AG04449 (cell line): ENCODE measurements at regions of chr17 and their contacts with region 1.

Region 1: GRCh38 chr17:63946440-63947367 is 14.6 kb upstream of the CD79B start:
- DNase-seq: no peak
- H3K4me3 ChIP-seq: no peak overlapping the region
- CTCF ChIP-seq: peak; percentile 77

Region 2: GRCh38 chr17:63911657-63912426 is 34.9 kb before region 1 on chr17:
- CTCF ChIA-PET with region 1: interaction called, 26 read pairs
- POLR2A ChIA-PET with region 1: no interaction called
- DNase-seq: no peak
- H3K4me3 ChIP-seq: no peak overlapping the region
- CTCF ChIP-seq: peak; percentile 79

Region 3: GRCh38 chr17:63919311-63919723 is 27.4 kb before region 1 on chr17:
- CTCF ChIA-PET with region 1: interaction called, 42 read pairs
- POLR2A ChIA-PET with region 1: no interaction called
- DNase-seq: no peak
- H3K4me3 ChIP-seq: no peak overlapping the region
- CTCF ChIP-seq: peak; percentile 89

Region 4: GRCh38 chr17:63925645-63926044 is 21.1 kb before region 1 on chr17:
- CTCF ChIA-PET with region 1: interaction called, 18 read pairs
- POLR2A ChIA-PET with region 1: no interaction called
- DNase-seq: no peak
- H3K4me3 ChIP-seq: no peak overlapping the region
- CTCF ChIP-seq: no peak

Region 5: DNA sequence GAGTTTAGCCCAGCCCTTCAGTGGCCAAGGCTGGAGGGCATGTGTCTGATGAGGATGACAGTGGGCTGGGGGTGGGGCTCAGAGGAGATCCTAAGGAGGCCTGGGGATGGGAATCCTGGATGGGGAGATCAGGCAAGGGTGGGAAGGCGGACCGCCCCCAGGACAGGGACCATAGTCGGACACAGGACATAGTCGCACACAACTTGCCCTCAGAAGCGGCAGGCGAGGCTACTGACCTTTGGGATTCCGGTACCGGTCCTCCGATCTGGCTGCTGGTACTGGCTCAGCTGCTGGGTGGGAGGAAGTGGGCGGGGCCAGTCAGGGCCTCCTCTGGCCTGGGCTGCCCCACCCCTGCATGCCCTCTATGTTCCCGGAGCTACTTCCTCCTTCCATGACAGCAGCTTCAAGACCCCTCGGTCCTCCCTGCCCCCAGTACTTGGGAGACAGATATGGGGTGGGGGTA is 15.6 kb before region 1 on chr17:
- CTCF ChIA-PET with region 1: interaction called, 24 read pairs
- POLR2A ChIA-PET with region 1: no interaction called
- DNase-seq: no peak
- H3K4me3 ChIP-seq: no peak overlapping the region
- CTCF ChIP-seq: no peak

Region 6: DNA sequence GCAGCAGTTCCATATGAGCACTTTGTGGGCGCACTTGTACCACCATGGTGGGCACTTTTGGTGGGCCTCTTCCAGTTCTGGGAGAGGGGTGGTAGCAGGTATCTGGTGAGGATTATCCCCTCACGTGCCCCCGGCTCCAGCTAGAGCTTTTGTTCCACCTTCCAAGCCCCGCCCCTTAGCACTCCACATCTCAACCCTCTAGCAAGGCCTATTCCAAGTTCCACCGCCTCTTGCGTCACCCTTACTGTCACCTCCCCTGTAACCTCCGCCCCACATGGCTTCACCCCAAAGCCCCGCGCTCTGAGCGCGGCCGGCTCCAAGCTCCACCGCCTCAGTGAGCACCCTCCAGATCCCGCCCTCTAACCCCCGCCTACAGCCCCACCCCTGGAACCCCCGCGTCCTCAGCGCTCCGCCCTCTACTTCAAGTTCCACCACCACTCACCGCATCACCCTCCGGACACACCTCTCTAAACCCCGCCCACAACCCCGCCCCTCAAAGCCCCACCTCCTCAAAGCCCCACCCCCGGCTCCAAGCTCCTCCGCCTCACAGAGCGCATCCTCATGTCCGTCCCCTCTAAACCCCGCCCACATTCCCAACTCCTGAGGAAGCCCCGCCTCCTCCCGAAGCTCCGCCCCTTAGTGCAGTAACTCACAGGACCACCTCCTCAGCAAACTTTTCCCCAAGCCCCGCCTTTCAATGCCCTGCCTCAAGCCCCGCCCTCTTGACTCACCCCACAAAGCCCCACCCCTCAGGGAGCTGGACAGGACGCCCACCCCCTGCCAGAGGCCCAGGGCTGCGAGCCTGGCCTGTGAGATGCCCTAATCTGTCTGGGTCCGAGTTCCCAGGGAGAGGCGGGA is 14.9 kb after region 1 on chr17:
- CTCF ChIA-PET with region 1: interaction called, 53 read pairs
- POLR2A ChIA-PET with region 1: no interaction called
- DNase-seq: no peak
- H3K4me3 ChIP-seq: no peak overlapping the region
- CTCF ChIP-seq: no peak

Region 7: GRCh38 chr17:63974594-63975192 is 28.0 kb after region 1 on chr17:
- CTCF ChIA-PET with region 1: interaction called, 22 read pairs
- POLR2A ChIA-PET with region 1: no interaction called
- DNase-seq: no peak
- H3K4me3 ChIP-seq: no peak overlapping the region
- CTCF ChIP-seq: no peak